ENCODE measurements at regions of chrX and their contacts with region 1.

Region 1: GRCh38 chrX:3129256-3129655 is 88.0 kb downstream of the ARSF start:
- DNase-seq: no peak
- ATAC-seq: no peak
- H3K4me3 ChIP-seq: no peak overlapping the region
- H3K27ac ChIP-seq: no peak overlapping the region
- H3K4me1 ChIP-seq: no peaks in the 10 kb centered on the region
- H3K27me3 ChIP-seq: no peaks in the 10 kb centered on the region
- CTCF ChIP-seq: no peak
- EP300 ChIP-seq: no peak
- POLR2A ChIP-seq: no peak
- RAD21 ChIP-seq: no peak

Region 2: GRCh38 chrX:3165808-3166207 is 36.6 kb after region 1 on chrX:
- CTCF ChIA-PET with region 1: no interaction called
- POLR2A ChIA-PET with region 1: no interaction called
- in situ Hi-C with region 1: no loop called
- intact Hi-C with region 1: no loop called
- DNase-seq: no peak
- ATAC-seq: no peak
- H3K4me3 ChIP-seq: no peak overlapping the region
- H3K27ac ChIP-seq: no peak overlapping the region
- H3K4me1 ChIP-seq: no peaks in the 10 kb centered on the region
- H3K27me3 ChIP-seq: no peaks in the 10 kb centered on the region
- CTCF ChIP-seq: no peak
- EP300 ChIP-seq: no peak
- POLR2A ChIP-seq: no peak
- RAD21 ChIP-seq: no peak

Region 3: GRCh38 chrX:3176439-3176820 is 47.2 kb after region 1 on chrX:
- CTCF ChIA-PET with region 1: no interaction called
- POLR2A ChIA-PET with region 1: no interaction called
- in situ Hi-C with region 1: no loop called
- intact Hi-C with region 1: loop called (anchors 2 kb)
- DNase-seq: no peak
- ATAC-seq: no peak
- H3K4me3 ChIP-seq: no peak overlapping the region
- H3K27ac ChIP-seq: no peak overlapping the region
- H3K4me1 ChIP-seq: no peaks in the 10 kb centered on the region
- H3K27me3 ChIP-seq: no peaks in the 10 kb centered on the region; a peak in 1 of 5 replicates
- CTCF ChIP-seq: no peak
- EP300 ChIP-seq: no peak
- POLR2A ChIP-seq: no peak
- RAD21 ChIP-seq: no peak

Region 4: DNA sequence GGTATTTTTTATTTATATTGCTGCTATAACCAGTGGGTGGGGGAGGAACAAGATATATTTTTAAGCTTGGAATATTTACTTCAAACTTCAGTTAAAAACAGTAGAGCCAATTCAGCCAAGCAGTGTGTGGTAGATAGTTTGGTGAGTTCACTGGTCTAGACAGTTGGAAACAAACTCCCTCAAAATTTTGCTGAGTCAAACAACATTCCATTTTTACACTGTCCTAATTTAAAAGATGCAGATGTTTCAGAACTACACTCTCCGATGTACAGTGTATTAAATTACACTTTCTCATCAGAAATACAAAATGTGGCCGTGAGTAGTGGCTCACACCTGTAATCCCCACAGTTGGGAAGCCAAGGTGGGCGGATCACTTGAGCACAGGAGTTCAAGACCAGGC is 560.9 kb after region 1 on chrX:
- CTCF ChIA-PET with region 1: no interaction called
- POLR2A ChIA-PET with region 1: no interaction called
- in situ Hi-C with region 1: no loop called
- intact Hi-C with region 1: no loop called
- DNase-seq: no peak
- ATAC-seq: peak; percentile 47; the same call in 2 of the 3 replicates
- H3K4me3 ChIP-seq: no peak overlapping the region
- H3K27ac ChIP-seq: no peak overlapping the region
- H3K4me1 ChIP-seq: no peaks in the 10 kb centered on the region; a peak in 1 of 5 replicates
- H3K27me3 ChIP-seq: no peaks in the 10 kb centered on the region
- CTCF ChIP-seq: no peak
- EP300 ChIP-seq: no peak
- POLR2A ChIP-seq: no peak
- RAD21 ChIP-seq: no peak

Measured in K562 (cell line).